Activated T-helper 2 cell treated with anti-CD3 and anti-CD28 coated beads, Interferon-gamma antibody, Interleukin-2, Interleukin-4, amounts not matched to agents 10 μg/mL and 5 μg/mL and 100 μg/mL, durations not matched to agents 14 hours and 24 hours and 36 hours (primary cell): ENCODE measurements at regions of chr11 and their contacts with region 1.

Region 1: DNA sequence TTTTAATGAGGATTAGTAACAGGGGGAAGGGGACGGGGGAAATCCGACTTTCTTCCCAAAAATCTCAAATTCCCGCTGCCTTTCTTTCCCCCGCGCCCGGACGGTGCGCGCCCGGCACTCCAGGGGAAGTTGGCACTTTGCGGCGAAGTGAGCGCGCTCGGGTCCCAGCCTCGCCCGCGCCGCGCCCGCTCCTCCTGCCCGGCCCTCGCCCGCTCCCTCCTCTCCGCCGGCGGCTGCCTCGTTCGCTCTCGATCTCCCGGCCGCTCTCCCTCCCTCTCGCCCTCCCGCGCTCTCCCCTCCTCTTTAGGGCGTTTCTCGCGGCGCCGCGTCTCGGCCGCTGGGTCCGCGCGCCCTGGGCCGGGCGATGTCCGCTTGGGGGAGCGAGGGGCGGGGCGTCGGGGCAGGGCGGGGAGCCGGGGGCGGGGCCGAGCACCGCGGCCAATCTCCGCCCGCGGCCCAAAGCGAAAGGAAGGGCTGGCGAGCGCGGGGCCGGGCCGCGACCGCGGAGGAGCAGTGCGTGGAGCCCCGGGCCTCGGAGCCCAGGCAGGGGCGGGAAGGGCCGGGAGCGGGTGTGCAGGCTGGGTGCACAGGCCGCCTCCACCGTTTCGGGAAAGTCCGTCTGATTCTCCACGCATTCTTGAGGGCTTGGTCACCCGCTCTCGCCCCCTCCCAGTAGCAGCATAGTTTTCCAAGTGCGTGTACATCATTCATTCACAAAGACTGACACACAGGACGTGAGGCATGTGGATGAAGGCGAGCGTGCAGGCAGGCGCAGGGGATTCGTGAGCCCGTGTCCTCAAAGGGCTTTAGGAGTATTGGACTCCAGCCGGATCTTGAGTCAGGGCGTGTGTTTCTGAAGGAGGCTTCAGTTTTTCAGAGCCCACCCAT is 65.1 kb downstream of the ETS1 start:
- DNase-seq: peak; percentile 90
- H3K4me3 Mint-ChIP-seq: peak overlapping the region; percentile 97
- H3K27ac Mint-ChIP-seq: peak overlapping the region; percentile 97
- H3K4me1 Mint-ChIP-seq: peaks cover 51% of the 10 kb centered on the region
- H3K27me3 Mint-ChIP-seq: no peaks in the 10 kb centered on the region

Region 2: DNA sequence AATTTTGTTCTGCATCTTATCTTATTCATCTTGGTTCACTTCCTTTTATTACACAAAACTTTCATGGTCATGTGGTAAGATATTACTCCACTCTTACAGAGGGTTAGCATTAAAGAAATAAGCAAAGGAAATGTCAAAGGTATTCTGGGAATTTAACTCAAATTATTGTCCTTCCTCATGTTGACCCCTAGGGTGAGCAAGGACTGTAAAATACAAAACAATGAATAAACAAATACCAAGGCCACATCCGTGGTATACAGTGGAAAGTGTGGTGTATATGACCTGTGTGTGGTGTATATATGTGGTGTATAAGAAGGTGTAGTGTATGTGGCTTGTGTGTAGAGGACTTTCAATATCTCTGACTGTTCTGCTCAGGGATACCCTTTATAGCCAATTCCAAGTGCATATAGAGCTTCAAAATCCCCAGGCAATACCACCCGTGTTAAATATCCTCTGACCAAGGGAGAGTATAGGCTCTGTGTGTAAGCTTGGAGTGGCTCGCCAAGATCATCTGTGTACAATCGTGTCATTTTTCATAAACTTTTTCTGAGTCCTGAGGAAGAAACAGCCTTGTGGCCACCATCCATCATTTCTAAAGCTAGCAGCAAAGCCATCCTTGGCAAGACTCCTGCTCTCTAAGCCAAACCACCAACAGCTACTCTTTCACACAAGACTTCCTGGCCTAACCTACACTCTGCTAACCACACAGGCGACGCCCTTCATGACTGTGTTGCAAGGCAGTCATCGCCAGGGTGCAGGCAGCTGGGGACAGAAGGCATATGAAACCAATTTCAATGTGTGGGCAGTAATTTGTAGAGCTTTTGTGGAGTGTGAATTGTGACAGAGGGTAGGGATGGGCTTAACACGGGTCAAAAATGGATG is 482.9 kb before region 1 on chr11:
- intact Hi-C with region 1: loop called (anchors 2 kb)
- DNase-seq: peak; percentile 80
- H3K4me3 Mint-ChIP-seq: peak overlapping the region; percentile 35
- H3K27ac Mint-ChIP-seq: peak overlapping the region; percentile 91
- H3K4me1 Mint-ChIP-seq: peaks cover 46% of the 10 kb centered on the region
- H3K27me3 Mint-ChIP-seq: no peaks in the 10 kb centered on the region

Region 3: DNA sequence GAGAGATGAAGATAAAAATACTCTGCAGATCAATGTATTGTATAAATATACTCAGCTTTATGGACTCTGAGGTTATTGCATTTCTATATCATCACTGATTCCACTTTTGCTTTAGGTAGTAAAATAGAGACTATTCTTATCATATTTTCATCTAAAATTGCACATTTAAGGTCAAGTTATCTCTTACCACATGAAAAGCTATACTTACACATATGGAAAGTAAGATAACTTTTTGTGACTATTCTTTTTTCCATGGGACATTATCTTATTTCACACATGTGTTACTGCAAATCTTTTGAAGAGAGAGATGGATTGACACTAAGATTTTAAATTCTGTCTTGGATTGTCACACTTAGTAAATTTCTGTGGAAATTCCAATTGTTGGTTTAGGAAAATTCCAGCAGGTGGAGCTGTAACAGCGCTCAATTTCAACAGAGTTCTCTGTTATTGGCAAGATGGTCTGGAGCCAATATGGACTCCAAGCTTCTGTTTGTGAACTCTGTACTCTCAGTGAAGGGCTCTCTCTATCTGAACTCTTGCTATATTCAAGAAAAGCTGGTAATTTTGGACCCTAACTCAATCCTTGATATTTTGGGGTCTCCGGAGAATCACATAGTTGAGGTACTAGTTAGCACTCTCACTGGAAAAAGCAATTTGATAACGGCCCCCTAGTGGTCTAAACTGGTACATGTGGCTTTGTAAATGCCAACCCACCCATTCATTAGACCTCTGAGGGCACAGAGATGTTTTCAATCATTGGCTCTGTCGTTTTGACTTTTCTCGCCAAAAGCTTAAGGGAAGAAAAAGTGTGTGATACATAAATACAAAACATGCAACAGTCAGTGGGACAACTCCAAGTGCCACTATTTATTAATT is 364.6 kb before region 1 on chr11:
- intact Hi-C with region 1: no loop called
- DNase-seq: peak; percentile 39
- H3K4me3 Mint-ChIP-seq: no peak overlapping the region
- H3K27ac Mint-ChIP-seq: peak overlapping the region; percentile 81
- H3K4me1 Mint-ChIP-seq: peaks cover 26% of the 10 kb centered on the region
- H3K27me3 Mint-ChIP-seq: no peaks in the 10 kb centered on the region

Region 4: GRCh38 chr11:128232588-128232987 is 289.7 kb before region 1 on chr11:
- intact Hi-C with region 1: loop called (anchors 1 kb)
- DNase-seq: no peak
- H3K4me3 Mint-ChIP-seq: no peak overlapping the region
- H3K27ac Mint-ChIP-seq: peak overlapping the region; percentile 81
- H3K4me1 Mint-ChIP-seq: peaks cover 58% of the 10 kb centered on the region
- H3K27me3 Mint-ChIP-seq: no peaks in the 10 kb centered on the region

Region 5: GRCh38 chr11:128342511-128343134 is 179.7 kb before region 1 on chr11:
- intact Hi-C with region 1: loop called (anchors 1 kb)
- DNase-seq: peak; percentile 55
- H3K4me3 Mint-ChIP-seq: peak overlapping the region; percentile 7
- H3K27ac Mint-ChIP-seq: peak overlapping the region; percentile 81
- H3K4me1 Mint-ChIP-seq: peaks cover 73% of the 10 kb centered on the region
- H3K27me3 Mint-ChIP-seq: no peaks in the 10 kb centered on the region

Region 6: DNA sequence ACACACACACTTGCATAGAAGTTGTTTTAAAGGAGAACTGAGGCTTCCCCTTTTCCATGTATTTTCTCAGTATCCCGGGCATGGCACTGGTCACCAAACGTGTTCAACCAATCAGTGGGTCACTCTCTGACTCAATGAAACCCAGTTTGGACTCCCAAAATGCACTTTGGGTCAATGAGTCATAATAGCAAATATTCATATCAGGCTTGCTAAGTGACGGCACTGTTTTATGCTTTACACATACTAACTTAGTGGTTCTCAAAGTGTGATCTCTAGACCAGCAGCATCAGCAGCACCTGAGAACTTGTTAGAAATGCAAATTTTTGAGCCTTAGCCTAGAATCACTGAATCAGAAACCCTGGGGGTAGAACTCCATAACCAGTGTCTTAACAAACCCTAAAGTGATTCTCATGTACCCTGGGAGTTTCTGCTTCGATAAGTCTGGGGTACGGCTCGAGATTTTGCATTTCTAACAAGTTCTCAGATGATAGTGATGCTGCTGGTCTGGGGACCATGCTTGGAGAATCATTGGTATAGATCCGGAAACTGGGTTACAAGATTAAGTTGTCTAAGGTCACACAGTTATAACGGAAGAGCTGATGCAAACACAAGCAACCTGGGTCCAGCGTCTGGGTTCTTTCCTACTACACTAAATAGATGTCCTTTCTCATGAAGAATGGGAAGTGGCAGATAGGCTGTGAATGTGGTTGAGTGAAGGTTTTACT is 29.5 kb after region 1 on chr11:
- intact Hi-C with region 1: loop called (anchors 1 kb)
- DNase-seq: no peak
- H3K4me3 Mint-ChIP-seq: no peak overlapping the region
- H3K27ac Mint-ChIP-seq: peak overlapping the region; percentile 73
- H3K4me1 Mint-ChIP-seq: peaks cover 42% of the 10 kb centered on the region
- H3K27me3 Mint-ChIP-seq: no peaks in the 10 kb centered on the region

Region 7: DNA sequence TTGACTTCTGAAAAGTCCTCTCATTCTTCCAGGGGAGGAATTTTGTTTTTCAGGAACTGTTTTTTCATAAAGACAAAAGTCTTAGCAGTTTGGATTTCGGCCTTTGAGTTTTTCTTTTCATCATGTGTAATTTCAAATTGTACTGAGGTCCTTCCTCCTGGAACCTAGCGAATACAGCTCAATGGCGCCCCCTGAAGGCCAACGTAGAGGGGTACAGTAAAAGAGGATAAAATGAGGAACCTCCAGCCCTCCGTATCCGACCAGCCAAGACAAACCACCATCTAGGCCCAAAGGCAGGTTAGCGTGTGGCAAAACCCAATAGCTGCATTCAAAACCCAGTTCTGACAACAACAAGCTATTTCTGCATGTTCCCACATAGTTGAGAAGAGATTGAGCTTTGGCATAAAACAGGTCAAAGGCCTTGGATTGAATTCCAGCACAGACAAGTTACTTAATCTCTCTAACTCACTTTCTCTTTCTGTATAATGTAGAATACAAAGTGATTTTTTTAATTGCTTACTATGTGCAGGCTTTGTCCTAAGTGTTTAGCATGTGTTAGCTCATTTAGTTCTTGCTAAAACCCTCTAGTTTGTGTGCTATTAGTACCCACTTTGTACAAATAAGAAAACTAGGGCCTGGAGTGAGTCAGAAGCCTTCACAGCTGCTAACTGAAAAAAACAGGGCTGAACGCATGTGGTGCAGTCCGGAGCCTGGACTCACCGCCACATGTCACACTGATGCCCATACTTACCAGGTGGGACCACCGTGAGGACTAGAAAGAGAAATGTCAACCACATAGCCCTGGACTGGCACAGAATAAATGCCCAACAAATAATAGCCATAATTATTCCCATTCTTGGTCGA is 108.3 kb after region 1 on chr11:
- intact Hi-C with region 1: loop called (anchors 1 kb)
- DNase-seq: peak; percentile 81
- H3K4me3 Mint-ChIP-seq: peak overlapping the region; percentile 28
- H3K27ac Mint-ChIP-seq: peak overlapping the region; percentile 97
- H3K4me1 Mint-ChIP-seq: peaks cover 59% of the 10 kb centered on the region
- H3K27me3 Mint-ChIP-seq: no peaks in the 10 kb centered on the region

Region 8: DNA sequence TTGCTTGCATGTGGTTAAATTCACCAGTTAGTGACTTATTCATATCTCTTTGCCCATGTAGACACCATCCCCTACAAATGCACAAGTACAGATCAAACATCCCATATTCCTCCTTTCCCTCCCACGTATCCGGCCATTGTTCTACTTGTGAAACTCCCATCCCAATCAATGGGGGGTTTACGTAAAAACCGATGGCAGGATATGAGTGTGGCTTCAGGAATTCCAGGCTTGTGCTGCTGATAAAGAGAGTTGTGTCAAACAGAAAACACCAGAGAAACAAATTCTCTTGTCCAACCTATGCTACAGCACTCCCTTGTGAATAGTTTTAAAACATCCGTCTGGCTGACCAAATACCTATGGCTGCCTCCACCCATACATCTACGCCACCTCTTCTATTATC is 187.1 kb after region 1 on chr11:
- intact Hi-C with region 1: no loop called
- DNase-seq: no peak
- H3K4me3 Mint-ChIP-seq: no peak overlapping the region
- H3K27ac Mint-ChIP-seq: no peak overlapping the region
- H3K4me1 Mint-ChIP-seq: peaks cover 69% of the 10 kb centered on the region
- H3K27me3 Mint-ChIP-seq: no peaks in the 10 kb centered on the region

Region 9: GRCh38 chr11:128831174-128832120 is 309.1 kb after region 1 on chr11:
- intact Hi-C with region 1: loop called (anchors 10 kb)
- DNase-seq: peak; percentile 75
- H3K4me3 Mint-ChIP-seq: peak overlapping the region; percentile 6
- H3K27ac Mint-ChIP-seq: peak overlapping the region; percentile 86
- H3K4me1 Mint-ChIP-seq: peaks cover 18% of the 10 kb centered on the region
- H3K27me3 Mint-ChIP-seq: peaks cover 5% of the 10 kb centered on the region